Sciatic nerve (tissue), 2 donors: ENCODE measurements at regions of chr9 and their contacts with region 1.

Region 1: DNA sequence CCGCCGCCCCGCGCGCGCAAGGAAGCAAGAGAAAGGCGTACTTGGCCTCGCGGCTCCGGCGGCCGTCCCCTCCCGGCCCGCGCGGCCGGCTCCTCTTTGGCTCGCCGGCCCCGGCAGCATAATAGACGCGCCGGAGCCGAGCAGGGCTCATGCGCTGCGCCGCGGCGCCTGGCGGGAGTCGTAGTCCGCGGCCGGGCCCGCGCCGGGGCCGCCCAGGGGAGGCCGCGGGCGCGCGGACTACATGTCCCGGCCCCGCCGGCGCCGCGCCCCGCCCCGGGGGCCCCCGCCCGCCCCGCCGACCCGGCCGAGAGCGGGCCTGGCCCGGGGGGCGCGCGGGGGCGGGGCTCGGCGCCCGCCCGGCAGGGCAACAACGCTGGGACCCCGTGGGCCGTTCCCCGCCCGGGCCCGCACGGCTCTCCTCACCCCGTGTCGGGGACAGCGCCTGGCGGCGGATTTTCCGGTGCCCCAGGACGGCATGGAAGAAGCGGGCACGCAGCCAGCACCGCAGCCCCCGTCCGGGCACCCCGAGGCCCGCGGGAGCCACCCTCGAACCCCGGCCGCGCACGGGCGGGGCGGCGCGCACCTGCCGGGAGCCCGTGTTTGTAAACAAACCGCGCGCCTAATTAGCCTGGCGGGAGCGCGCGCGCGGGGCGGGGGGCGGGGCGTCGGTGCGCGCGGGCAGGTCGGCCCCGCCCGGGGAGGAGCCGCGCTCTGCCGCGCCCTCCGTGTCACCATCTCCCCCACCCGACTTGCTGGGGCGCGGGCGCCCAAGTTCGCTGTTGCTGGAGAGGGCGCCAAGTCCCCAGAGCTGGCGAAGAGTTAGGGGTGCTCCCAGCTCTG is at the start of gene BRD3:
- DNase-seq: peak; percentile 88
- ATAC-seq: peak; percentile 89
- total RNA-seq, gene BRD3: 54.4 TPM

Region 2: GRCh38 chr9:134158753-134159392 is 90.7 kb after region 1 on chr9:
- intact Hi-C with region 1: loop called (anchors 10 kb)
- DNase-seq: no peak
- ATAC-seq: no peak

Region 3: DNA sequence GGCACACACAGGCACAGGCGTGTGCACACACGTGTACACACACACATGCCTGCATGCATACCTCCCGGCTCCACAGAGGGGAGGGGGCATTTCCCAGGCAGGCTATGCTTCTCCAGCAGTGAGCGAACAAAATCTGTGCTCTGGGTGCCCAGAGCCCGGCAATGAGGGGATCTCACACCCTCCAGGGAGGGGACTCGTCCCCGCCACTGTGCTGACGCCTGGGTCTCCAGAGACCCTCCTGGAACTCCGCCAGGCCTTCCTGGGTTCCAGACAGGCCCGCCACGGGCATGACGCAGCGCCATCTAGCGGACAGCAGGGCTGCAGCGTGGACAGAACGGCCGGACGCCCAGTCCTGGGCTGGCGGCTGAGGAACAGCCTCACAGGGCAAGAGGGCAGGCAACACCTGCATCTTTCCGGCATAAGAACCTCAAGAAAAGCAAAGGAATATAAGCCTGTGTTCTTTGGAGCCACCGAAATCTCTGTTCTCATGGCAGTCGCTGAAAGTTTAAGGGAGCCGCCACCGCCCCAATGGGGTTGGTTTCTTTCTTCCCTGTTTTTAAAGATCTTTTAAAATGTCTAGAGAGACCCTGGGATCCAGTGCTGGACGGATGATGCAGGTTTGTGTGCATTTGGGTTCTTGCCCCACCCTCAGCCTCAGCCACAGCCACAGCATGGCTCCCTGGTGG is 1275.9 kb after region 1 on chr9:
- intact Hi-C with region 1: no loop called
- DNase-seq: peak; percentile 85
- ATAC-seq: peak; percentile 75